BJ (cell line): ENCODE measurements at regions of chr4 and their contacts with region 1.

Region 1: DNA sequence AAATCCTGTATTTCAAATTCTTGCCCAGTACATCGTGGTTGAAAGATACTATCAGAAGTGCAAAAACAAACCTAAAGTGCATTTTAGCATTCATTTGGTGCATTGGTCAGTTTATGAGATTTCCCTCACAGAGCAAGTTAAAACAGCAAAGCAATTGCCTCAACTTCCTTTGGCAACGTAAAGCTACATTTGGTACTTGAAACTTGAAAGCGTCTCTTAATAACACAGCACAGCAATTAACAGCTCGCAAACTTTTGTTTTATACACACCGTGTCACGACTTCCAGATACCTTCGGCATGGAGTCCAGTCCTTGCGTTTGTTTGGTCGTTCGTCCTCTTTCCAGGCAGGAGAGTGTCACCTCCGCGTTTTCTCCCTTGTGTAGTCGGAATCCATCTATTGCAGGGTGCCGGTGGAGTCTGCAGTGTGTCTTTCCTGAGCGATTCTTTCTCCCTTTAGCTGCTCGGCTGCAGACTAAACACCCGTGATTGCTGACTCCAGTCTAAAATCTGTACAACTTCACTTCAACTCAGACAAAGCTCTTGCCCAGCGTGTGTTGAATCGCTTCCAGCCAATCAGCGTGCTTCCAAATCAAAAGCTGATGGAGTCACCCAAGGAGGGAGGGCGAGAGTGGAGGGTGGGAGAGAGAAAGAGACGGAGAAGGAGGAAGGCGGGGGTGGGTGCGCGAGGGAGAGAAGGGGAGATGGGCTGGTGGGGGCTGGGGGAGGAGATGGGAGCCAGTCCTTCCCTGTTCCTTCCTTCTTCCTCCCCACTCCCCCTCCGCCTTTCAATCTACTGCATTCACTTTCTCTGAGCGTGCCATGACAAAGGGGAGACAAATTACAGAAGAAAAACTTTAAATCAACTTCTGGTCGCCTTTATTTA is at the start of gene PCDH18:
- DNase-seq: peak; percentile 87
- H3K4me3 ChIP-seq: peak within 1 kb of the TSS; percentile 57
- H3K27me3 ChIP-seq: no peaks in the 10 kb centered on the region
- CTCF ChIP-seq: no peak
- polyA plus RNA-seq, gene PCDH18: 122 and 138 TPM in 2 replicates

Region 2: DNA sequence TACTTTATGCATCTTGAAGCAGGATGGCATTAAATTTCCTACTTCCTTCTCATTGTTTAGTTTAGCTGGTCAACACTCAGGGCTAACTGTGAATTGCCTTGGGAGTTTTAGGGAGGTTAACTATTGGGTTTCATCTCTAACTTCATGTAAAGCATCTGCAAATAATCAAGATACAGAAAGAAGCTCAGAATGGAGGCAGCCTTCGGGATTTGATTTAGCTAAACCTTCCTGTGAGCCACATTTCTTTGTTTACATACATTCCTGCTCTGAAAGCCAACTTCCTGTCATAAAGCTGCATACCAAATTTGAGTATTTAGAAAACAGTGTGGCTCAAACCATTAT is 131.8 kb after region 1 on chr4:
- CTCF ChIA-PET with region 1: interaction called, 10 read pairs
- POLR2A ChIA-PET with region 1: no interaction called
- DNase-seq: peak; percentile 88
- H3K4me3 ChIP-seq: no peak overlapping the region
- H3K27me3 ChIP-seq: no peaks in the 10 kb centered on the region
- CTCF ChIP-seq: no peak